K562 (cell line): ENCODE measurements at regions of chr7 and their contacts with region 1.

Region 1: DNA sequence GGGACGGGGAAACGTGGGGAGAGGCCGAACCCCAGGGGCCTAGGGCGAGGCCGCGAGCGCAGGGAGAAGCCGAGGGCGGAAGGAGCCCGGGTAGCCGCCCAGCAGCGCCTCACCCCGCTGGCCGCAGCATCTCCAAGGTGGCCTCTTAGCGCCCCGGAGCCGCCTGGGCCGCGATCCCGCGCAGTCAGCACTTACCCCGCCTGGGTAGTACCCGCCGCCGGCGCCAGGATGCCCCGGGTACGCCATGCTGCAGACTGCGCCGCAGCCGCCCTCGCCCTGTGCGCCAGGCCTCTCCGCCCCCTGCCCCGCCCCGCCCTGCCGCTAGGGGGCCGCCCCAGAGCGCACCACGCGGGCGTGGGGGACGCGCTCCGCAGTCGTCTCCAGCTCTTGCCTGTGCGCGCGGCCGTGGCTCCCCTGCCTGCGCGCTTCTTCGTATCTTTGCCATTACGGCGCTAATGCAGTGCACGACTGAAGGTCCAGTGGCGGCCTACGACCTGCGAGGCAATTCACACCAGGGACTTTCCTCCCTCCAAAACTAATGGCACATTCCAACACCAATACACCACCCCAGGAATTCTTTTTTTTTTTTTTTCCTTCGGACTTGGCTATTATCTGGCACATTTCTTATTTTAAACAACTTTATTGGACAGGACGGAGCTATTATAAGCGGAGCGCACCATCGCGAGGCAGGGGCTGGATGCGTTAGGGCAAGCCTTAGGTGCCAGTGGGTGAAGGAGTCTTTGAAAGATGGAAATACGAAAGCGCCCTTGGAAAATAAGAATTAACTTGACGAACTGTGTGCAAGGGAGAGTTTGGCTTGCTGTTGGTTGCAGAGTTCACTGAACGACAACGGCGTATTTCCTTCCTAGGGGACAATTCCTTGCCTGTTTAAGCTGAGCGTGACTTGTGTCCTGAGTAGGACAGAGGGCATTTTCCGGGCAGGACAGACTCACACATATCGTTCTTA is at the start of gene SRI:
- DNase-seq: peak; percentile 92 to 94 (median 93)
- ATAC-seq: peak; percentile 97
- H3K4me3 ChIP-seq: peak within 1 kb of the TSS; percentile 89
- H3K27ac ChIP-seq: peak within 1 kb of the TSS; percentile 94
- H3K4me1 ChIP-seq: peaks cover 0 to 20% of the 10 kb centered on the region in 2 experiments; a peak in 3 of 5 replicates
- H3K27me3 ChIP-seq: no peaks in the 10 kb centered on the region
- CTCF ChIP-seq: peak; percentile 60 to 72 (median 68)
- EP300 ChIP-seq: no peak
- POLR2A ChIP-seq: peak; percentile 78
- RAD21 ChIP-seq: no peak
- polyA plus RNA-seq, gene SRI: 68.3 to 111 TPM

Region 2: DNA sequence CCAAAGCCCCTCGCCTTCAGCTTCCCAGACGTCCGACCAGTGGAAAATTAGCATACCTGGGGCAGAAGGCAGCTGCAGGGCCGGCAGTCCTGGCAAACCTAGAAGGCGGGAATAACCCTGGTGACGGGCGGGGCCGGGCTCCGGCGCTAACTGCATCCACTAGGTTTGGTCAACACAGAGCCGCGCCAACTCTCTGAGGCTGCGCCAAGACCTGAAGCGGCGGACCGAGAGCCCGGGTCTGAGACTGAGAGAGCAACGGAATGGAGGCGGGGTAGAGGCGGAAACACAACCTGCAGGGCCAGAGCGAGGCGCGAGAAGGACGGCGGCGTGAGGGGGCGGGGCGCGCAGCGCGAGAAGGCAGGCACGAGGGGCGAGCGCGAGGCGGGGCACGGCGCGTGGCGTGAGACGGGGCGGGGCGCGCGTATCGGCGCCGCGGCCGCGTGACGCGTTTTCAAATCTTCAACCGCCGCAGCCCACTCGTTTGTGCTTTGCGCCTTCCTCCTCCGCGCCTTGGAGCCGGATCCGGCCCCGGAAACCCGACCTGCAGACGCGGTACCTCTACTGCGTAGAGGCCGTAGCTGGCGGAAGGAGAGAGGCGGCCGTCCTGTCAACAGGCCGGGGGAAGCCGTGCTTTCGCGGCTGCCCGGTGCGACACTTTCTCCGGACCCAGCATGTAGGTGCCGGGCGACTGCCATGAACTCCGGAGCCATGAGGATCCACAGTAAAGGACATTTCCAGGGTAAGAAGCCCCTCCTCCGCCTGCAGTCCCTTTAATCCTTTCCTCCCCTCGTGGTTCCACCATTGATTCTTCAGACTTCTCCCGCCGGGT is 343.8 kb before region 1 on chr7 and contains the starts of genes DBF4 and SLC25A40:
- CTCF ChIA-PET with region 1: no interaction called
- POLR2A ChIA-PET with region 1: no interaction called
- in situ Hi-C with region 1: no loop called
- intact Hi-C with region 1: loop called (anchors 10 kb)
- DNase-seq: peak; percentile 92 to 98 (median 93)
- ATAC-seq: peak; percentile 86
- H3K4me3 ChIP-seq: peak within 1 kb of the TSS; percentile 86
- H3K27ac ChIP-seq: peak within 1 kb of the TSS; percentile 92
- H3K4me1 ChIP-seq: peaks cover 10% of the 10 kb centered on the region in 2 experiments; a peak in 4 of 5 replicates
- H3K27me3 ChIP-seq: no peaks in the 10 kb centered on the region
- CTCF ChIP-seq: no peak
- EP300 ChIP-seq: peak; percentile 57; the same call in 1 of the 2 replicates
- POLR2A ChIP-seq: peak; percentile 92
- RAD21 ChIP-seq: no peak
- polyA plus RNA-seq, gene DBF4: 38.4 to 43.5 TPM
- polyA plus RNA-seq, gene SLC25A40: 19.0 to 25.1 TPM

Region 3: DNA sequence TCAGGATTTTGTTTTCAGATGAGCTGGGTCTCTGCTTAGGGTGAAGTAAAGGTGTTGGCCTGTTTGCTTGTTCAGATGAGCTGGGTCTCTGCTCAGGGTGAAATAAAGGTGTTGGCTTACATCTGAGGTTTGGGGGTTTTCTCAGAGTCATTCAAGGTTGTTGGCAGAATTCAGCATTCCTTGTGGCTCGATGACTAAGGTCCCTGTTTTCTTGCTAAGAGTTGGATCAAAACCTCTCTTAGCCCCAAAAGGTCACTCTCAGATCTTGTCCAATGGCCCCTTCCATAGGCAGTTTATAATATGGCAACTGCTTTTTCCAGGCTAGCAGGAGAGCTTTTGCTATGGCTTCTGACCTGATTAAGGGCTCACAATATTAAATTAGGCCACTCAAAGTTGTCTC is 179.4 kb before region 1 on chr7:
- CTCF ChIA-PET with region 1: no interaction called
- POLR2A ChIA-PET with region 1: no interaction called
- in situ Hi-C with region 1: no loop called
- intact Hi-C with region 1: no loop called
- DNase-seq: no peak
- ATAC-seq: no peak
- H3K4me3 ChIP-seq: no peak overlapping the region
- H3K27ac ChIP-seq: no peak overlapping the region
- H3K4me1 ChIP-seq: no peaks in the 10 kb centered on the region
- H3K27me3 ChIP-seq: no peaks in the 10 kb centered on the region
- CTCF ChIP-seq: no peak
- EP300 ChIP-seq: no peak
- POLR2A ChIP-seq: no peak
- RAD21 ChIP-seq: no peak

Region 4: DNA sequence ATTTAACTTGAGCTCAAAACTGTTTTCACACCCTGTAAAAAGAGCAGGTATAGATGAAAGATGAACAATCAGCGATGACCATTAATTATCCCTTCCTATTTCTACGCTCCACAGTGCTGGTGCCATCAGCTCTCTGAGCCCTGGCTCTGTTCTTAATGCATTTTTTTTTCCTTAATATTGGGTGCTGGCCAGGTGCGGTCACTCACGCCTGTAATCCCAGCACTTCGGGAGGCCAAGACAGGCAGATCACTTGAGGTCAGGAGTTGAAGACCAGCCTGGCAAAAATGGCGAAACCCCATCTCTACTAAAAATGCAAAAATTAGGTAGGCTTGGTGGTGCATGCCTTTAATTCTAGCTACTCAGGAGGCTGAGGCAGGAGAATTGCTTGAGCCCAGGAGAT is 82.4 kb after region 1 on chr7:
- CTCF ChIA-PET with region 1: no interaction called
- POLR2A ChIA-PET with region 1: no interaction called
- in situ Hi-C with region 1: no loop called
- intact Hi-C with region 1: no loop called
- DNase-seq: no peak
- ATAC-seq: no peak
- H3K4me3 ChIP-seq: no peak overlapping the region
- H3K27ac ChIP-seq: no peak overlapping the region
- H3K4me1 ChIP-seq: peaks cover 0 to 3% of the 10 kb centered on the region in 2 experiments; a peak in 1 of 5 replicates
- H3K27me3 ChIP-seq: peaks cover 2 to 13% of the 10 kb centered on the region in 2 experiments; a peak in 3 of 5 replicates
- CTCF ChIP-seq: no peak
- EP300 ChIP-seq: no peak
- POLR2A ChIP-seq: no peak
- RAD21 ChIP-seq: no peak

Region 5: GRCh38 chr7:88396295-88396947 is 176.4 kb after region 1 on chr7:
- CTCF ChIA-PET with region 1: no interaction called
- POLR2A ChIA-PET with region 1: no interaction called
- in situ Hi-C with region 1: no loop called
- intact Hi-C with region 1: no loop called
- DNase-seq: no peak
- ATAC-seq: no peak
- H3K4me3 ChIP-seq: no peak overlapping the region
- H3K27ac ChIP-seq: no peak overlapping the region
- H3K4me1 ChIP-seq: no peaks in the 10 kb centered on the region
- H3K27me3 ChIP-seq: no peaks in the 10 kb centered on the region
- CTCF ChIP-seq: no peak
- EP300 ChIP-seq: no peak
- POLR2A ChIP-seq: no peak
- RAD21 ChIP-seq: no peak

Region 6: DNA sequence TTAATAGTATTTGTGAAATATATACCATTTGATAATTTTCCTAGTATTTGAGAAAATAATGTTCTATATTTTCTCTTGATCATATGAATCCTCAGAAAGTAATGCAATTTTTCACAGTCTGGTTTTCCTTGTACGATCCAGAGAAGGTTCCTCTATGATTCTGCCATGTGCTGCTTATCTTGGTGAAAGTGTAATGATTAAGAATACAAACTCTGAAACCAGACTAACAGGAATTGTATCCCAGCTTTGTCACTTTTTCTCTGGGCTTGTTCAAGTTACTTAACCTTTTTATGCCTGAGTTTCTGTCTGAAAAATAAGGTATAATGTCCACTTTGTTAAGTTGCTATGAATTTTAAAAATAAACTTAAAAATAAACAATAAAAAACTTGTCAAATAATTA is 369.9 kb after region 1 on chr7:
- CTCF ChIA-PET with region 1: no interaction called
- POLR2A ChIA-PET with region 1: no interaction called
- in situ Hi-C with region 1: no loop called
- intact Hi-C with region 1: no loop called
- DNase-seq: no peak
- ATAC-seq: no peak
- H3K4me3 ChIP-seq: no peak overlapping the region
- H3K27ac ChIP-seq: no peak overlapping the region
- H3K4me1 ChIP-seq: no peaks in the 10 kb centered on the region; a peak in 1 of 5 replicates
- H3K27me3 ChIP-seq: no peaks in the 10 kb centered on the region
- CTCF ChIP-seq: no peak
- EP300 ChIP-seq: no peak
- POLR2A ChIP-seq: no peak
- RAD21 ChIP-seq: no peak

Region 7: GRCh38 chr7:88686468-88687229 is 466.6 kb after region 1 on chr7:
- CTCF ChIA-PET with region 1: no interaction called
- POLR2A ChIA-PET with region 1: no interaction called
- in situ Hi-C with region 1: no loop called
- intact Hi-C with region 1: loop called (anchors 5 kb)
- DNase-seq: no peak
- ATAC-seq: no peak
- H3K4me3 ChIP-seq: no peak overlapping the region
- H3K27ac ChIP-seq: no peak overlapping the region
- H3K4me1 ChIP-seq: peaks cover 18 to 52% of the 10 kb centered on the region in 2 experiments
- H3K27me3 ChIP-seq: no peaks in the 10 kb centered on the region
- CTCF ChIP-seq: no peak
- EP300 ChIP-seq: no peak
- POLR2A ChIP-seq: no peak
- RAD21 ChIP-seq: no peak